HCT116 (cell line): ENCODE measurements at regions of chr10 and their contacts with region 1.

Region 1: GRCh38 chr10:86254526-86255174 is 111.9 kb downstream of the GRID1 start:
- DNase-seq: peak; percentile 70
- ATAC-seq: peak; percentile 93
- H3K4me3 ChIP-seq: 0 out of 4 replicates have a peak overlapping the region, but pooled peaks of 1 of the 2 experiments have one; percentile 5
- H3K27ac ChIP-seq: no peak overlapping the region
- H3K4me1 ChIP-seq: peaks cover 20 to 25% of the 10 kb centered on the region in 2 experiments
- H3K27me3 ChIP-seq: no peaks in the 10 kb centered on the region
- CTCF ChIP-seq: no peak
- POLR2A ChIP-seq: no peak
- RAD21 ChIP-seq: no peak; the same call in 1 of the 2 replicates

Region 2: GRCh38 chr10:86244297-86245014 is 10.2 kb before region 1 on chr10:
- CTCF ChIA-PET with region 1: no interaction called
- POLR2A ChIA-PET with region 1: no interaction called
- RAD21 ChIA-PET with region 1: no interaction called
- intact Hi-C with region 1: no loop called
- DNase-seq: no peak
- ATAC-seq: no peak
- H3K4me3 ChIP-seq: no peak overlapping the region
- H3K27ac ChIP-seq: no peak overlapping the region
- H3K4me1 ChIP-seq: no peaks in the 10 kb centered on the region
- H3K27me3 ChIP-seq: no peaks in the 10 kb centered on the region
- CTCF ChIP-seq: no peak
- POLR2A ChIP-seq: no peak
- RAD21 ChIP-seq: no peak

Region 3: DNA sequence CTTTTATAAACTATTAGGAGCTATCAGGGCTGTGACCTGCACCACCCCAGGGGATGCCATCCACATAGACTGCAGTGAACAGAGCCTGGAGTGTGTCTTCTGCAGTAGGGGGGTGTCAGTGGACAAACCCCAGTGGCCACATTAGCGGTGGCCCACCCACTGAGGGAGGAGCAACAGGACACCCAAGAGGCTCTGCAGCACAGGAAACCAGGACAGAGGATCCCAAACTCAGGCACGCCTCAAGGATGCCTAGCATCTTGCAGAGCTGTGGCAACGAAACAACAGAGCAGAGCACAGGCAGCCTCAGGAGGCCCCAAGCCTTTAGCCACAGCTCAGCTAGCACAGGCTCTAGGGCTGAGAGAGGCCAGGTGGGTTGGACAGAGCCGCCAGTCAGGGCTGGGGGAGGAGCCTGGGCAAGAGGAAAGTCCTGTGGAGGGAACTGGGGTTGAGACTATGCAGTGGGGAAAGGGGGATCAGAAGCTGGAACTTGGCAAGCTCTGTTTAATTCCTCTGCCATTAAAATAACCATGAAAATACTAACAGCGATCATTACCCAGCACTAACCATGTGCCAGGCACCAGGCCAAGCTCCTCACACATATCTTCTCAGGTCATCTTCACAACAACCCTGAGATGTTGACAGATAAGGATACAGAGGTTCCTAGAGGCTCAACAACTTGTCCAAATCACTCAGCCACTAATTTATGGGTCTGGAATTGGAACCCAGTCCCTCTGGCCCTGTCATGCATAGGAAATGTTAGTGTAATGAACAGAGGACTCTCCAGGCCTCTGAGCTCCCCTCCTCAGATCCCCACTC is 58.3 kb after region 1 on chr10:
- CTCF ChIA-PET with region 1: no interaction called
- POLR2A ChIA-PET with region 1: no interaction called
- RAD21 ChIA-PET with region 1: no interaction called
- intact Hi-C with region 1: no loop called
- DNase-seq: no peak
- ATAC-seq: peak; percentile 44; the same call in 1 of the 2 replicates
- H3K4me3 ChIP-seq: no peak overlapping the region
- H3K27ac ChIP-seq: no peak overlapping the region
- H3K4me1 ChIP-seq: peaks cover 0 to 3% of the 10 kb centered on the region in 2 experiments; a peak in 2 of 4 replicates
- H3K27me3 ChIP-seq: no peaks in the 10 kb centered on the region
- CTCF ChIP-seq: no peak
- POLR2A ChIP-seq: no peak
- RAD21 ChIP-seq: no peak

Region 4: GRCh38 chr10:86334488-86335085 is 79.9 kb after region 1 on chr10:
- CTCF ChIA-PET with region 1: no interaction called
- POLR2A ChIA-PET with region 1: no interaction called
- RAD21 ChIA-PET with region 1: no interaction called
- intact Hi-C with region 1: loop called (anchors 5 kb)
- DNase-seq: peak; percentile 29
- ATAC-seq: peak; percentile 93
- H3K4me3 ChIP-seq: no peak overlapping the region
- H3K27ac ChIP-seq: no peak overlapping the region
- H3K4me1 ChIP-seq: peaks cover 2 to 9% of the 10 kb centered on the region in 2 experiments; a peak in 2 of 4 replicates
- H3K27me3 ChIP-seq: no peaks in the 10 kb centered on the region
- CTCF ChIP-seq: peak; percentile 33 to 50 (median 50); a peak in 5 of 6 replicates
- POLR2A ChIP-seq: no peak
- RAD21 ChIP-seq: peak; percentile 59

Region 5: GRCh38 chr10:86535057-86535882 is 280.6 kb after region 1 on chr10:
- CTCF ChIA-PET with region 1: no interaction called
- POLR2A ChIA-PET with region 1: no interaction called
- RAD21 ChIA-PET with region 1: no interaction called
- intact Hi-C with region 1: no loop called
- DNase-seq: peak; percentile 31
- ATAC-seq: peak; percentile 99
- H3K4me3 ChIP-seq: peak overlapping the region; percentile 51 to 57
- H3K27ac ChIP-seq: peak overlapping the region; percentile 53
- H3K4me1 ChIP-seq: peaks cover 10 to 24% of the 10 kb centered on the region in 2 experiments
- H3K27me3 ChIP-seq: no peaks in the 10 kb centered on the region
- CTCF ChIP-seq: no peak
- POLR2A ChIP-seq: no peak
- RAD21 ChIP-seq: no peak

Region 6: GRCh38 chr10:86815035-86815617 is 560.5 kb after region 1 on chr10:
- CTCF ChIA-PET with region 1: no interaction called
- POLR2A ChIA-PET with region 1: no interaction called
- RAD21 ChIA-PET with region 1: no interaction called
- intact Hi-C with region 1: no loop called
- DNase-seq: no peak
- ATAC-seq: no peak
- H3K4me3 ChIP-seq: no peak overlapping the region
- H3K27ac ChIP-seq: no peak overlapping the region
- H3K4me1 ChIP-seq: no peaks in the 10 kb centered on the region
- H3K27me3 ChIP-seq: no peaks in the 10 kb centered on the region
- CTCF ChIP-seq: no peak
- POLR2A ChIP-seq: no peak
- RAD21 ChIP-seq: no peak